Esophagus muscularis mucosa (tissue), 4 donors: ENCODE measurements at regions of chr10 and their contacts with region 1.

Region 1: DNA sequence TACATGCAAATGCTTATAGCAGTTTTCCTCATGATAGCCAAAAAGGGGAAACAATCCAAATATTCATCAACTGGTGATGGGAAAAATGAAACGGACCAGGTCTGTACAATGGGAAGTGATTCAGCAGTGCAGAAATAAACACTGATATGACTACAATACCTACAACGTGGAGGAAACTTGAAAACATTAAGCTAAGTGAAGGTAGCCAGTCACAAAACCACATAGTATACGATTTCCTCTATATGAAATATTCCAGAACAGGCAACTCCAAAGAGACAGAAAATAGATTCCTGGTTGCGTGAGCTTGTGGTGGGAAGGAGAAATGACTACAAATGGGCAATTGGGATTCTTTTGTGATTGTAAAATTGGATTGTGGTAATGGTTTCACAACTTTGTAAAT is 263.1 kb upstream of the PITRM1 start:
- DNase-seq: no peak
- H3K4me3 ChIP-seq: no peak overlapping the region
- H3K27ac ChIP-seq: no peak overlapping the region
- H3K4me1 ChIP-seq: peaks cover 0 to 30% (median 24%) of the 10 kb centered on the region in 4 donors
- H3K27me3 ChIP-seq: no peaks in the 10 kb centered on the region
- CTCF ChIP-seq: no peak
- EP300 ChIP-seq: no peak
- POLR2A ChIP-seq: no peak

Region 2: GRCh38 chr10:2358586-2358985 is 1077.1 kb before region 1 on chr10:
- intact Hi-C with region 1: no loop called
- DNase-seq: no peak
- H3K4me3 ChIP-seq: no peak overlapping the region
- H3K27ac ChIP-seq: no peak overlapping the region
- H3K4me1 ChIP-seq: no peaks in the 10 kb centered on the region
- H3K27me3 ChIP-seq: no peaks in the 10 kb centered on the region
- CTCF ChIP-seq: no peak
- EP300 ChIP-seq: no peak
- POLR2A ChIP-seq: no peak

Region 3: GRCh38 chr10:3248888-3249758 is 186.5 kb before region 1 on chr10:
- intact Hi-C with region 1: loop called (anchors 10 kb)
- DNase-seq: no peak
- H3K4me3 ChIP-seq: peak overlapping the region in 1 of 4 donors; percentile 19
- H3K27ac ChIP-seq: peak overlapping the region; percentile 70 to 83 (median 77)
- H3K4me1 ChIP-seq: peaks cover 3 to 22% (median 18%) of the 10 kb centered on the region in 4 donors
- H3K27me3 ChIP-seq: no peaks in the 10 kb centered on the region
- CTCF ChIP-seq: no peak
- EP300 ChIP-seq: no peak
- POLR2A ChIP-seq: no peak

Region 4: GRCh38 chr10:3419502-3420495 is 15.9 kb before region 1 on chr10:
- intact Hi-C with region 1: no loop called
- DNase-seq: no peak
- H3K4me3 ChIP-seq: no peak overlapping the region
- H3K27ac ChIP-seq: no peak overlapping the region
- H3K4me1 ChIP-seq: peaks cover 0 to 7% (median under 1%) of the 10 kb centered on the region in 4 donors
- H3K27me3 ChIP-seq: no peaks in the 10 kb centered on the region
- CTCF ChIP-seq: no peak
- EP300 ChIP-seq: no peak
- POLR2A ChIP-seq: no peak

Region 5: GRCh38 chr10:3573498-3573897 is 137.8 kb after region 1 on chr10:
- intact Hi-C with region 1: no loop called
- DNase-seq: peak; percentile 64
- H3K4me3 ChIP-seq: no peak overlapping the region
- H3K27ac ChIP-seq: no peak overlapping the region
- H3K4me1 ChIP-seq: peaks cover 0 to 24% (median 8%) of the 10 kb centered on the region in 4 donors
- H3K27me3 ChIP-seq: no peaks in the 10 kb centered on the region
- CTCF ChIP-seq: no peak
- EP300 ChIP-seq: no peak
- POLR2A ChIP-seq: no peak

Region 6: GRCh38 chr10:3692387-3692999 is 256.8 kb after region 1 on chr10:
- intact Hi-C with region 1: no loop called
- DNase-seq: peak; percentile 26
- H3K4me3 ChIP-seq: no peak overlapping the region
- H3K27ac ChIP-seq: peak overlapping the region in 2 of 4 donors; percentile 2 to 21
- H3K4me1 ChIP-seq: peaks cover 7 to 10% (median 9%) of the 10 kb centered on the region in 4 donors
- H3K27me3 ChIP-seq: no peaks in the 10 kb centered on the region
- CTCF ChIP-seq: no peak
- EP300 ChIP-seq: no peak
- POLR2A ChIP-seq: no peak